A549 (cell line): ENCODE measurements at regions of chr12 and their contacts with region 1.

Region 1: GRCh38 chr12:106282457-106283097 is 20.0 kb upstream of the TCP11L2 start:
- DNase-seq: peak; percentile 62 to 83
- ATAC-seq: peak; percentile 77 to 91
- H3K4me3 ChIP-seq: no peak overlapping the region
- H3K27ac ChIP-seq: peak overlapping the region in 1 of 2 experiments; percentile 11; a peak in 1 of 6 replicates
- H3K4me1 ChIP-seq: peaks cover 4% of the 10 kb centered on the region
- CTCF ChIP-seq: peak; percentile 69
- EP300 ChIP-seq: no peak
- POLR2A ChIP-seq: no peak
- RAD21 ChIP-seq: peak; percentile 66 to 87

Region 2: DNA sequence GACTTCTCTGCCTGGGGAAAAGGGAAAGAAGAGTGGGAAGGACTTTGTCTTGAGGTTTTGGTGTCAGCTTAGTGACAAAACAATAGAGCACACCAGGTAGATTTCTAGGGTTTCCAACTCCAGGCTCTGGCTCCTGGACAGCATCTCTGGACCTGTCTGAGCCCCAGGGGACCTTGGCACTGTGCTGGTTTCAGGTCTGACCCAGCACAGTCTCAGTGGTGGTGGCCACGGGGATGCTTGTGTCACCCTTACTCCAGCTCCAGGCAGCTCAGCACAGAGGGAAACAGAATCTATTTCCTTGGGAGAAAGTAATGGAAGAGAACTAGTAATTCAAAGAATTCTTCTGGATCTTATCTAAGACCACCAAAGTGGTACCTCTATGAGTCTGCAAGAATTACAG is 23.6 kb before region 1 on chr12:
- CTCF ChIA-PET with region 1: interaction called, 10 read pairs
- POLR2A ChIA-PET with region 1: no interaction called
- DNase-seq: no peak
- ATAC-seq: no peak
- H3K4me3 ChIP-seq: no peak overlapping the region
- H3K27ac ChIP-seq: no peak overlapping the region
- H3K4me1 ChIP-seq: no peaks in the 10 kb centered on the region
- CTCF ChIP-seq: no peak
- EP300 ChIP-seq: no peak
- POLR2A ChIP-seq: no peak
- RAD21 ChIP-seq: no peak

Region 3: GRCh38 chr12:106296193-106296877 is 13.8 kb after region 1 on chr12:
- CTCF ChIA-PET with region 1: interaction called, 19 read pairs
- POLR2A ChIA-PET with region 1: no interaction called
- DNase-seq: peak; percentile 39 to 69
- ATAC-seq: peak; percentile 90 to 94
- H3K4me3 ChIP-seq: no peak overlapping the region
- H3K27ac ChIP-seq: peak overlapping the region; percentile 22 to 57; a peak in 4 of 6 replicates
- H3K4me1 ChIP-seq: peaks cover 21% of the 10 kb centered on the region
- CTCF ChIP-seq: no peak
- EP300 ChIP-seq: no peak
- POLR2A ChIP-seq: no peak
- RAD21 ChIP-seq: no peak